Colonic mucosa (tissue), 4 donors: ENCODE measurements at regions of chr12 and their contacts with region 1.

Region 1: GRCh38 chr12:122190842-122191668 is 8.1 kb downstream of the LRRC43 start:
- DNase-seq: peak; percentile 84
- H3K4me3 ChIP-seq: no peak overlapping the region
- H3K27ac ChIP-seq: no peak overlapping the region
- H3K4me1 ChIP-seq: no peaks in the 10 kb centered on the region
- H3K27me3 ChIP-seq: no peaks in the 10 kb centered on the region
- CTCF ChIP-seq: peak; percentile 86

Region 2: DNA sequence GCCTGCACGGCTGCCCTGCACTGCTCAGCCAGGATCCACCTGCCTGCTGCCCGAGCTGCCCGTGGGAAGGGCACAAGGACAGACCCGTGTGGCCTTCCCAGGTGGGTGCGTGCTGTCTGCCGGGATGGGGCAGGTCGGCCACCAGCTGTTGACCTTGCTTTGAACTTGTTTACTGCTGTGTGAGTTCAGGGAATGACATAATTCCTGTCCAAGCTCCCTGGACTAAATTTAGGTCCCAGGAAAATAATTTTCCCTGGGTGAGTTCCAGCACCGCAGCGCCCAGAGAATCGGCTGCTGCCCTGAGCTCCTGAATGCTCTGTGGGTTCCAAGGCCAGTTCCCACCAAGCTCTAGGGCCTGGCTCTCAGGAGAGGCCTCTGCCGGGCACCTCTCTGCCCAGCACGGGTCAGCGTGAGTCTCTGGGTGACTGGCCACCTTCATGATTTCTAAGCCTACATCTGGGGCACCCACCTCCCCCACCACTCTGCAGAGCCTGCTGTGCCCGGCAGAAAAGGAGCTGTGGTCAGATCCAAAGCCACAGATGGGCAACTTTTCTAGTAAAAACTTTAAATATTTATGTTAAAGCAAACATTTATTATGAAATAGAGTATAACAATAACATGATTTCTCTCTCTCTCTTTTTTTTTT is 139.7 kb before region 1 on chr12:
- intact Hi-C with region 1: loop called (anchors 5 kb)
- DNase-seq: no peak
- H3K4me3 ChIP-seq: no peak overlapping the region
- H3K27ac ChIP-seq: no peak overlapping the region
- H3K4me1 ChIP-seq: no peaks in the 10 kb centered on the region
- H3K27me3 ChIP-seq: no peaks in the 10 kb centered on the region
- CTCF ChIP-seq: no peak

Region 3: DNA sequence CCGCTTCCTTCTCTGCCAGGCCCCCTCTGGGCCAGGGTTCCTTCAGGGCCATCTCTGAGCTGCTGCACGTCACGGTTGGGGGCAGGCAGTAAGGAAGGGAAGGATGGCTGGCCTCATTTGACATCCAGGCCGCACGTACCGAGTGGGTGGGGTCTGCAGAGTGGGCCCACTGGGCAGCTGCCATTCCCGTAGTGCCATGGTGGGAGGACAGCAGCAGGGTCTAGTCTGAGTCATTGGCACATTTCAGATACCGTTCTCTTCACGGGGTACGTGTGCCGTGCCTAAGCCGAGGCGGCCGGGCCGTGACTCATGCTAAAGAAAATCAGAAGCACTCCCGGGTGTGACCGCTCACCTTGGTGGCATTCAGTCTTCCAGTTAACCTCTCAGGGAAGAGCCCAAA is 60.9 kb before region 1 on chr12:
- intact Hi-C with region 1: loop called (anchors 5 kb)
- DNase-seq: no peak
- H3K4me3 ChIP-seq: no peak overlapping the region
- H3K27ac ChIP-seq: no peak overlapping the region
- H3K4me1 ChIP-seq: peaks cover 8% of the 10 kb centered on the region
- H3K27me3 ChIP-seq: no peaks in the 10 kb centered on the region
- CTCF ChIP-seq: no peak

Region 4: DNA sequence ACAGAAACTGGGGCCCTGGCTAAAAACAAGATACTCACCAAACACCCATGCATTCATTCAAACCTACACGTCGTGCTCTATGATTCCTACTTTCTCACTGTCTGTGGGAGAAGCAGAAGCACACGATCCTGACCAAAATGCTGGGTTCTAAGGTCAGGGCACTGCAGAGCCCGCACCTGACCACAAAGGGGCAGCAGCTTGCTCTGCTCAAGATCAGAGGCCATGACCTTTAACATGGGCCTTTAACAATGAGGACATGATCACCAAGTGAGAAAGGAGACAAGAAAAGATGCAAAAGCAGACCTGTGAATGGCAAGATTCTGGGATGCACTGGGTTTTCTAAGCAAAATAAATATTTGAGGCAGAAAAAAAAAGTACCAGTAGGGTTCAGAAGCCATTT is 115.4 kb after region 1 on chr12:
- intact Hi-C with region 1: no loop called
- DNase-seq: no peak
- H3K4me3 ChIP-seq: no peak overlapping the region
- H3K27ac ChIP-seq: no peak overlapping the region
- H3K4me1 ChIP-seq: no peaks in the 10 kb centered on the region
- H3K27me3 ChIP-seq: no peaks in the 10 kb centered on the region
- CTCF ChIP-seq: no peak

Region 5: GRCh38 chr12:122681814-122682213 is 490.8 kb after region 1 on chr12:
- intact Hi-C with region 1: no loop called
- DNase-seq: no peak
- H3K4me3 ChIP-seq: no peak overlapping the region
- H3K27ac ChIP-seq: no peak overlapping the region
- H3K4me1 ChIP-seq: no peaks in the 10 kb centered on the region
- H3K27me3 ChIP-seq: no peaks in the 10 kb centered on the region
- CTCF ChIP-seq: no peak